B cell (primary cell): ENCODE measurements at regions of chr14 and their contacts with region 1.

Region 1: DNA sequence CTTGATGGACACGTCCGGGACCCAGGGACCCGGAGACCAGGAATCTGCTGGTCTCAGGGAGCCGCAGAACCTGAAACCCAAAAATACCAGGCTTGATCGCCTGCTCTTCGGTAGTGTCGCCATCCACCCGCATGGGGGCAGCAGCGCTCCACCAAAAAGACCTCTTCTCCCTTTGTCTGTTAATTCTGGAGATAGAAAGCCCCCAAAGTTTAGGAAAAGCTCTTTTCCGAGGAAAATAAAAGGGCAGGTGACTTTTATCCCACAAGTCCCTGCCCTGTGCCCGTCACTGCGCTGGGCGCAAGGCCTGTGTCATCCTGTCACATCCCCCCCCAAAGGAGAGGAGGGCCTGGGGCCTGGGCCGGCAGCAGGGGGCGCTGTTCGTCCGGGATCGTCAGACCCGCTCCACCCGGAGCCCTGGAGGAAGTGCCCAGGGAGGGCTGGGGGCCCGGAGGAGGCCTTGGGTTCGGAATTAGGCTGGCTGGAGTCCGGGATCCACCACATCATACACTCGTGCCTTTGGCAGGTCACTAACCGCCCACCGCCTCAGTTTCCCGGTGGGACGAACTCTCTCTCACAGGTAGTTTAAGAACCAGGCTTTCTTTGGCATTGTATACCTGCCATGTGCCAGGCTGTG is 31.9 kb downstream of the DAD1 start:
- DNase-seq: peak; percentile 93
- ATAC-seq: peak; percentile 42
- H3K4me3 ChIP-seq: peak overlapping the region; percentile 7 to 71 (median 49)
- H3K4me3 Mint-ChIP-seq: peak overlapping the region; percentile 73
- H3K27ac ChIP-seq: peak overlapping the region; percentile 99 to 100
- H3K27ac Mint-ChIP-seq: peak overlapping the region; percentile 97
- H3K4me1 ChIP-seq: peaks cover 61 to 85% of the 10 kb centered on the region in 2 donors
- H3K4me1 Mint-ChIP-seq: peaks cover 84% of the 10 kb centered on the region
- H3K27me3 ChIP-seq: no peaks in the 10 kb centered on the region
- H3K27me3 Mint-ChIP-seq: peaks cover 3% of the 10 kb centered on the region
- CTCF ChIP-seq: peak; percentile 100

Region 2: GRCh38 chr14:22314181-22314820 is 242.8 kb before region 1 on chr14:
- CTCF ChIA-PET with region 1: interaction called, 17 read pairs
- POLR2A ChIA-PET with region 1: no interaction called
- intact Hi-C with region 1: loop called (anchors 1 kb)
- DNase-seq: peak; percentile 78
- ATAC-seq: peak; percentile 93
- H3K4me3 ChIP-seq: no peak overlapping the region
- H3K4me3 Mint-ChIP-seq: no peak overlapping the region
- H3K27ac ChIP-seq: no peak overlapping the region
- H3K27ac Mint-ChIP-seq: no peak overlapping the region
- H3K4me1 ChIP-seq: no peaks in the 10 kb centered on the region
- H3K4me1 Mint-ChIP-seq: peaks cover 5% of the 10 kb centered on the region
- H3K27me3 ChIP-seq: no peaks in the 10 kb centered on the region
- H3K27me3 Mint-ChIP-seq: no peaks in the 10 kb centered on the region
- CTCF ChIP-seq: peak; percentile 88

Region 3: GRCh38 chr14:22472935-22473854 is 83.9 kb before region 1 on chr14:
- CTCF ChIA-PET with region 1: interaction called, 157 read pairs
- POLR2A ChIA-PET with region 1: interaction called, 10 read pairs
- intact Hi-C with region 1: loop called (anchors 1 kb)
- DNase-seq: peak; percentile 82
- ATAC-seq: peak; percentile 56
- H3K4me3 ChIP-seq: no peak overlapping the region
- H3K4me3 Mint-ChIP-seq: no peak overlapping the region
- H3K27ac ChIP-seq: no peak overlapping the region
- H3K27ac Mint-ChIP-seq: peak overlapping the region; percentile 75
- H3K4me1 ChIP-seq: peaks cover 60 to 74% of the 10 kb centered on the region in 2 donors
- H3K4me1 Mint-ChIP-seq: peaks cover 89% of the 10 kb centered on the region
- H3K27me3 ChIP-seq: no peaks in the 10 kb centered on the region
- H3K27me3 Mint-ChIP-seq: no peaks in the 10 kb centered on the region
- CTCF ChIP-seq: peak; percentile 77

Region 4: DNA sequence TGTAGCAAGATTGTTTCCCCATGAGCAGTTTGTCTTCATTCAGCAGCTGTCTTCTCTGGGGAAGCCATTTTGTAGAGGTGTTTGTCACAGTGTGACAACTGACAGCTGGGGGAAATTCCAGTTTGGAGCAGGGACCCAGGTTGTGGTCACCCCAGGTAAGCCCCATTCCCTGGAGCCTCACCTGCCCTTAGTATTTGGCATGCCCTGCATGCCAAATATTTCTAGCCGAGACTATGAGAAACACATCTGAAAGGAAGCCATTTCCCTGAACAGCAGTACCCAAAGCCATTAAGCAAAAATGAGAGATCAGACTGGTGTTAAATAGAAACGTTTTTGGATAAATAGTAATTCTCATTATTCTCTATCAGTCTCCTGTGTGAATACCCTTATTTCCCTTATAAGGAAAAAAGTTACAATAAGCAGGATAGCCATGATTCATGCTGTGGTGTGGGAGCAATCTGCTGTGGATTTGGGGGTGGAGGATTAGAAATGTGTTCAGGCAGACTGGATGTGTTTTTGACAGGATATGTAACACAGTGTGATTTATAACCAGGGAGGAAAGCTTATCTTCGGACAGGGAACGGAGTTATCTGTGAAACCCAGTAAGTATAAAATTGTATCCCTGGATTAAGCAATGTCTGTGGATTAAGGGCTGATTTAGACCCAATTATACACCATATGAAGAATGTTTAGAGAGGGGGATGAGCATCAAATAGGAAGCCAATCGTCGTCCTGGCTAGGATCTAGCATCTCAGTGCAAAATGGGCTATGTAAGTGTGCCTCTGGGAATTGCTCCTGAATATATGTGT is 37.0 kb before region 1 on chr14:
- CTCF ChIA-PET with region 1: interaction called, 29 read pairs
- POLR2A ChIA-PET with region 1: interaction called, 12 read pairs
- intact Hi-C with region 1: loop called (anchors 5 kb)
- DNase-seq: no peak
- ATAC-seq: no peak
- H3K4me3 ChIP-seq: peak overlapping the region in 1 of 5 experiments; percentile 6
- H3K4me3 Mint-ChIP-seq: peak overlapping the region; percentile 55
- H3K27ac ChIP-seq: peak overlapping the region; percentile 56 to 68
- H3K27ac Mint-ChIP-seq: peak overlapping the region; percentile 91
- H3K4me1 ChIP-seq: peaks cover 64 to 91% of the 10 kb centered on the region in 2 donors
- H3K4me1 Mint-ChIP-seq: peaks cover 90% of the 10 kb centered on the region
- H3K27me3 ChIP-seq: no peaks in the 10 kb centered on the region
- H3K27me3 Mint-ChIP-seq: no peaks in the 10 kb centered on the region
- CTCF ChIP-seq: no peak

Region 5: GRCh38 chr14:22791301-22791700 is 234.2 kb after region 1 on chr14:
- CTCF ChIA-PET with region 1: no interaction called
- POLR2A ChIA-PET with region 1: interaction called, 5 read pairs
- intact Hi-C with region 1: loop called (anchors 2 kb)
- DNase-seq: peak; percentile 31
- ATAC-seq: no peak
- H3K4me3 ChIP-seq: no peak overlapping the region
- H3K4me3 Mint-ChIP-seq: peak overlapping the region; percentile 43
- H3K27ac ChIP-seq: peak overlapping the region; percentile 75 to 84
- H3K27ac Mint-ChIP-seq: peak overlapping the region; percentile 78
- H3K4me1 ChIP-seq: peaks cover 43 to 51% of the 10 kb centered on the region in 2 donors
- H3K4me1 Mint-ChIP-seq: peaks cover 59% of the 10 kb centered on the region
- H3K27me3 ChIP-seq: no peaks in the 10 kb centered on the region
- H3K27me3 Mint-ChIP-seq: no peaks in the 10 kb centered on the region
- CTCF ChIP-seq: no peak

Region 6: GRCh38 chr14:22886500-22887259 is 329.6 kb after region 1 on chr14:
- CTCF ChIA-PET with region 1: interaction called, 4 read pairs
- POLR2A ChIA-PET with region 1: interaction called, 4 read pairs
- intact Hi-C with region 1: loop called (anchors 1 kb)
- DNase-seq: peak; percentile 89
- ATAC-seq: peak; percentile 62
- H3K4me3 ChIP-seq: peak overlapping the region; percentile 44 to 83 (median 67)
- H3K4me3 Mint-ChIP-seq: peak overlapping the region; percentile 97
- H3K27ac ChIP-seq: peak overlapping the region; percentile 85 to 94
- H3K27ac Mint-ChIP-seq: peak overlapping the region; percentile 99
- H3K4me1 ChIP-seq: peaks cover 55 to 83% of the 10 kb centered on the region in 2 donors
- H3K4me1 Mint-ChIP-seq: peaks cover 71% of the 10 kb centered on the region
- H3K27me3 ChIP-seq: no peaks in the 10 kb centered on the region
- H3K27me3 Mint-ChIP-seq: no peaks in the 10 kb centered on the region
- CTCF ChIP-seq: peak; percentile 42

Region 7: DNA sequence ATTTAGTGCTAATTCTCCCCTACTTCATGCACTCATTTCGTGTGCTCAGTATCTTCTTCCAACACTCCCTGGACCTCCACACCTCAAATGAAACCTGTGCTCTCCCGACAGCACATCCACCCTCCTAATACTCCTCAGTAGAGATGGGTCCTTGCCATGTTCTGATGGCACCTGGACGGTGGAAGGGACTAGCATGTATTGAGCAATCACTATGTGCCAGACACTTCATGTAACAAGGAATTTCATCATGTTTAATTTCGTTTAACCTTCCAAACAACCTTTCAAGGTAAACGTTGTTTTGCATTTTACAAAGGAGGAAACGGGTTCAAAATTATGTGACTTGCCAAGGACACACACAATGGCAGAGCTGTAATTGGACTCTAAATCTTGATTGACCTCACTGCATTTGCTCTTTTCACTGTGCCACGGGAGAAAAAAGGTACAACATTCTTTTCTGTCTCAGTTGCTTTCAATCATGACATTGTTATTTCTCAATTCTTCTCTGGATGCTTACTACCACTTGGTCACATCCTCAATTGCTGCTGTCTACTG is 638.5 kb after region 1 on chr14:
- CTCF ChIA-PET with region 1: no interaction called
- POLR2A ChIA-PET with region 1: no interaction called
- intact Hi-C with region 1: no loop called
- DNase-seq: no peak
- ATAC-seq: no peak
- H3K4me3 ChIP-seq: no peak overlapping the region
- H3K4me3 Mint-ChIP-seq: no peak overlapping the region
- H3K27ac ChIP-seq: no peak overlapping the region
- H3K27ac Mint-ChIP-seq: no peak overlapping the region
- H3K4me1 ChIP-seq: no peaks in the 10 kb centered on the region
- H3K4me1 Mint-ChIP-seq: no peaks in the 10 kb centered on the region
- H3K27me3 ChIP-seq: no peaks in the 10 kb centered on the region
- H3K27me3 Mint-ChIP-seq: peaks cover 9% of the 10 kb centered on the region
- CTCF ChIP-seq: no peak